Endothelial cell of umbilical vein (primary cell): ENCODE measurements at regions of chr14 and their contacts with region 1.

Region 1: DNA sequence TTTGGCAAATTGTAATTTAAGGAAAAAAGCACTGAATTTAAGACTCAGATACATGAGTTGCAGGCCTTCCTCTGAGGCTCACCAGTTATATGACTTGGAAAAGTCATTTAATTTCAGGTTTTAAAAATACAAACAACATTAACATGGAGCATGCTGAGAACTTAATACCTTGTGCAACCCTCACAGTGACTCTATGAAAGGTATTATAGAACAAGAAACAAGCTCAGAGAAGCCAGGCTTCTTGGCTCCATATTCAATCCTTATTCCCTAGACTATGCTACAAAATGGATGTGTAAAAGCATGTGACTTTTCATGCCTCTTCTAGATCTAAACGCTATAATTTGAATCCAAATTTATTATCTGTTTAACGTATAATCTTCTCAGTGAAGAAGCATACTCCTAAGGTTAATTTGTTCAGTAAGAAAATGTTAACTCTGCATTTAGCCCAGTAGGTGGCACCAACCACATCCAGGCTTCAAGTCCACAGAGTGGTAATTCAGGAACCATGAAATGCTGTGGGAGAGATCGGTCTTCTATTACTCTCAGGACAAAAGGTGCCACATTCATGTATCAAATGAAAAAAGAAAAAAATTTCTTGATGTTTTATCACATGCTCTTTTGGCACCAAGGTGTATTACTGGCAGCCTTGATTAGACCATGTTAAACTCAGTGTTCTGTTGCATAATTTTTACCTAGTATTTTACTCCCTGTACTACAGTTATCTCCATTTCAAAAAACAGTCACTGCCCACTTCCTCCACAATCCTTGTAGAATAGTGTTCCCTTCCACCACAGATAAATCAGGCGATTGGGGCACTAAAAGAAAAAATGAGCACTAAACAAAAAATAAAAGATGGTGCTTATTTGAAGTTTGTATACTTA is 9.3 kb downstream of the CCDC196 start:
- DNase-seq: peak; percentile 71
- H3K4me3 ChIP-seq: no peak overlapping the region
- H3K27ac ChIP-seq: no peak overlapping the region
- H3K4me1 ChIP-seq: no peaks in the 10 kb centered on the region
- H3K27me3 ChIP-seq: no peaks in the 10 kb centered on the region
- CTCF ChIP-seq: peak; percentile 59 to 61
- POLR2A ChIP-seq: no peak

Region 2: GRCh38 chr14:66295386-66295785 is 200.1 kb before region 1 on chr14:
- CTCF ChIA-PET with region 1: no interaction called
- POLR2A ChIA-PET with region 1: no interaction called
- dilution Hi-C with region 1: no loop called
- intact Hi-C with region 1: no loop called
- DNase-seq: no peak
- H3K4me3 ChIP-seq: no peak overlapping the region
- H3K27ac ChIP-seq: no peak overlapping the region
- H3K4me1 ChIP-seq: no peaks in the 10 kb centered on the region
- H3K27me3 ChIP-seq: no peaks in the 10 kb centered on the region
- CTCF ChIP-seq: no peak
- POLR2A ChIP-seq: no peak

Region 3: DNA sequence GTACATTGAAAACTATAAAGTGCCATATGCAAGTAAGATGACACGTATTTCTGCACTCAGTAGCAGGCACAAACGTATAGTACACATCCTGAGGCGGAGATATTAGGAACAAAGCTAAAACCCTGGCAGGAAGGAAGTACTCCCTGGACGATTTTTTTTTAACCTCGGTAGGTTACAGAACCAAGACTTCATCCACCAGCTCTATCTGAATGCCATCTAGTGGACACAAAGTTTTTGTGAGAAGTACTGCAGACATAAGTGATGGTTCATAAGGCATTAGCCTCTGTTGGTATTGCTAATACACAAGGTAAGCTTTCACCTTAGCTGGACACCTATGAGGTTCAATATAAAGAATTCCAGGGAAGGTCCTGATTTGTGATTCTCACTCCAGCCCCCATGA is 92.3 kb before region 1 on chr14:
- CTCF ChIA-PET with region 1: no interaction called
- POLR2A ChIA-PET with region 1: no interaction called
- dilution Hi-C with region 1: no loop called
- intact Hi-C with region 1: no loop called
- DNase-seq: peak; percentile 27
- H3K4me3 ChIP-seq: no peak overlapping the region
- H3K27ac ChIP-seq: no peak overlapping the region
- H3K4me1 ChIP-seq: peaks cover 11% of the 10 kb centered on the region
- H3K27me3 ChIP-seq: no peaks in the 10 kb centered on the region
- CTCF ChIP-seq: peak; percentile 9 to 31
- POLR2A ChIP-seq: no peak

Region 4: GRCh38 chr14:66425402-66425801 is 70.1 kb before region 1 on chr14:
- CTCF ChIA-PET with region 1: no interaction called
- POLR2A ChIA-PET with region 1: no interaction called
- dilution Hi-C with region 1: no loop called
- intact Hi-C with region 1: no loop called
- DNase-seq: no peak
- H3K4me3 ChIP-seq: no peak overlapping the region
- H3K27ac ChIP-seq: no peak overlapping the region
- H3K4me1 ChIP-seq: no peaks in the 10 kb centered on the region
- H3K27me3 ChIP-seq: no peaks in the 10 kb centered on the region
- CTCF ChIP-seq: no peak
- POLR2A ChIP-seq: no peak

Region 5: DNA sequence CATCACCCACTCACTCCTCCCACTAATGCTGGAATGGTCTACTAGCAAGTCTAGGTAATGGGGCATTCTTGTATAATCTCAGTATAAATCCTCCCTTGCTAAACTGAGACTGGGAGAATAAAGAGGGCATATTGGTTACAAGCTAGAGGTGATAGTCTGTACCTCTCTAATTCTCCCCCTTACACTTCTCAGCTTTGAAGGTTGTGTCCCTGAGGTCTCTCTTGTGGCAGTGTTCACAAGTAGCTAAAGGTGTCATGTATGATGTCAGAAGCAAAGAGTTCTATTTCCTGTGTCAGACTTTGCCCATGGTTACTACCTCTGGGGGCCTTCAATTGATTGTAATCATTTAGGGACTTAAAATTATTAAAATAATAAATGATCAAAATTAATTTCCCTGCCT is 35.9 kb before region 1 on chr14:
- CTCF ChIA-PET with region 1: no interaction called
- POLR2A ChIA-PET with region 1: no interaction called
- dilution Hi-C with region 1: no loop called
- intact Hi-C with region 1: no loop called
- DNase-seq: no peak
- H3K4me3 ChIP-seq: no peak overlapping the region
- H3K27ac ChIP-seq: no peak overlapping the region
- H3K4me1 ChIP-seq: no peaks in the 10 kb centered on the region
- H3K27me3 ChIP-seq: no peaks in the 10 kb centered on the region
- CTCF ChIP-seq: no peak
- POLR2A ChIP-seq: no peak

Region 6: DNA sequence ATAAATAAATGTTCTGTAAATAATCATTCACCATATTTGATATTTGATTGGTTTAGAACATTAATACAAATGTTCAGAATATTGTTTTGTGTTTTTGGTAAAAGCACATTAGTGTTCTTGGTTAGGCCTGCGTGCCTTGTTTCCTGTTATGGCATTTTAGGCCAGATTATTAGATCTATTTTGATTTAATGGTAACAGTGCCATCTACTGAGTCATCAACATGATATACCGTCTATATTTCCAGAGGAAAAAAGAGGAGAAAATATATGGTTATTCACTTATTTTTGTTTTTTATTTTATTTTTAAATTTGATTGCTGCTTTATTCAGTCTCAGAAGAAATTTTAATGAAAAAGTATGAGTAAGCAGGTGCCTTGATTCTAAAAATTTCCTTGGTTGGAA is 72.8 kb after region 1 on chr14:
- CTCF ChIA-PET with region 1: interaction called, 3 read pairs
- POLR2A ChIA-PET with region 1: no interaction called
- dilution Hi-C with region 1: no loop called
- intact Hi-C with region 1: loop called (anchors 2 kb)
- DNase-seq: peak; percentile 31
- H3K4me3 ChIP-seq: no peak overlapping the region
- H3K27ac ChIP-seq: no peak overlapping the region
- H3K4me1 ChIP-seq: peaks cover 3% of the 10 kb centered on the region
- H3K27me3 ChIP-seq: no peaks in the 10 kb centered on the region
- CTCF ChIP-seq: no peak
- POLR2A ChIP-seq: no peak

Region 7: DNA sequence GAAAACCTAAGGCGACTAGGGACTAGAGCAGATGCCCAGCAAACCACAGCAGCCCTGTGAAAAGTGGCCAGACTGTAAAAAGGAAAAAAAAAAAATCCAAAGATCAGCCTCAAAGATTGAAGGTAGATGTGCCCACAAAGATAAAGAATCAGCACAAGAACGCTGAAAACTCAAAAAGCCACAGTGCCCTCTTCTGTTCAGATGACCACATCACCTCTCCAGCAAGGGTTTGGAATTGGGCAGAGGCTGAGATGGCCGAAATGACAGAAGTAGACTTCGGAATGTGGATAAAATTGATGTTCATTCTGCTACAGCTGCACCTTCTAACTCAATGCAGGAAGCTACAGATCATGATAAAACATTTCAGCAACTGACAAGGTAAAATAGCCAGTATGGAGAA is 166.9 kb after region 1 on chr14:
- CTCF ChIA-PET with region 1: interaction called, 19 read pairs
- POLR2A ChIA-PET with region 1: no interaction called
- dilution Hi-C with region 1: no loop called
- intact Hi-C with region 1: loop called (anchors 1 kb)
- DNase-seq: peak; percentile 41
- H3K4me3 ChIP-seq: no peak overlapping the region
- H3K27ac ChIP-seq: no peak overlapping the region
- H3K4me1 ChIP-seq: no peaks in the 10 kb centered on the region
- H3K27me3 ChIP-seq: no peaks in the 10 kb centered on the region
- CTCF ChIP-seq: peak; percentile 64 to 66
- POLR2A ChIP-seq: no peak

Region 8: DNA sequence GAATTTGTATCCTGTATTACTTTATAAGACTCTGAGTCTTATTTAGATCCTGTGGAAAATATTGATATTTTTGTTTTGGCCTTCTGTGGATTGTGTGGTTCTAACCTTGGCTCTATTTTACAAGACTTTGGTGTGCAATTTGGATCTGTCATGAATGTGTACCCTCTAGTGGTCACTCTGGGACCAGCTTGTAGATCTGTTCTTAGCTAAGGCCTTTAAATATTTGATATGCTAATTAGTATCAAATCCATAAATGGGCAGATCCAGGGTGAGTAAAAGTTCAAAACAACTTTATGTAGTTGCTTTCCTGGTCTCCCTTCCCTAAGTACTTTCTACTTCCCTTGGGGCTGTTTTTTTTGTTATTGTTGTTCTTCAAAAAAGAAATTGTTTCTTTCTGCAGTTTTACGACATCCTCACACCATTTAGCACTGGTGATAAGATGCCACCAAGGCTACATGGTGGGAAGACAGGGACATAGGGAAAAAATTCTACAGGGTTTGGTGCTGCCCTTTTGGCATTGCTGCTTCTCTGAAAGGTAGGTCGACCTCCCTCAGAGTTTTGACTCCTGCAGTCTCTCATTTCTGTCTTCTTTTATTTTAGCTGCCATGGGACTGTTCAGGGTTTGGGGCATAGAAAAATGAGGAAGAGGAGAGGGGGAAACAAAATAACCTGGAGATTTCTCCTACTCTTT is 251.0 kb after region 1 on chr14:
- CTCF ChIA-PET with region 1: interaction called, 8 read pairs
- POLR2A ChIA-PET with region 1: no interaction called
- dilution Hi-C with region 1: no loop called
- intact Hi-C with region 1: loop called (anchors 5 kb)
- DNase-seq: peak; percentile 70
- H3K4me3 ChIP-seq: no peak overlapping the region
- H3K27ac ChIP-seq: no peak overlapping the region
- H3K4me1 ChIP-seq: no peaks in the 10 kb centered on the region
- H3K27me3 ChIP-seq: no peaks in the 10 kb centered on the region
- CTCF ChIP-seq: peak; percentile 50 to 56
- POLR2A ChIP-seq: no peak

Region 9: DNA sequence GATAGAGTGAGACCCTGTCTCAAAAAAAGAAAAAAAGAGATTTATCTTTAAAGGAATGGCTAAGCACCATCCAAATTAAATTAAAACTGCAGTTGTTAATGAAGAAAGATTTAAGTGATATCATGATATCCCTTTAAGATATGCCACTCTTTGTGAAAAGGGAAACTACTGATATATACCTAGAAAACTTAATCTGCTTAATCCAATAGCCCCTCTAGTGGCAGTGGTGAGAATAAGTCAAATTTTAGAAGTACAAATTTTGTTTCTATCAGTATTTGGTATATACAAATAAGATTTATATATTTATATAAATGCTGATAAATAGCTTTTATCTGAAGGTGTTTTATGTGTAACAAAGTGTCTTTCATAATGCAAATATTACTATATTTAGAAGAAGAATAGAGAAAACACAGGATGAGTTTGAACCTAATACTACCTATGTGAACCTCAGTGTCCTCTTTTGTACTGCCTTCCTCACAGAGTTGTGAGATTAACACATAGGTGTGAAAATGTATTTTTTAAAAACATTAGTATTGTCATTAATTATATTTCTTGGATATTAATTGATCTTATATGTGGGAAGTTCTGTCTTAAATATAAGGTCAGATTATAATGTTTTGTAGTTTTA is 642.4 kb after region 1 on chr14:
- CTCF ChIA-PET with region 1: no interaction called
- POLR2A ChIA-PET with region 1: no interaction called
- dilution Hi-C with region 1: no loop called
- intact Hi-C with region 1: loop called (anchors 1 kb)
- DNase-seq: peak; percentile 9
- H3K4me3 ChIP-seq: no peak overlapping the region
- H3K27ac ChIP-seq: no peak overlapping the region
- H3K4me1 ChIP-seq: no peaks in the 10 kb centered on the region
- H3K27me3 ChIP-seq: no peaks in the 10 kb centered on the region
- CTCF ChIP-seq: peak; percentile 16 to 18
- POLR2A ChIP-seq: no peak